ENCODE measurements at regions of chr11 and their contacts with region 1.

Region 1: GRCh38 chr11:32817181-32817851 is 12.4 kb upstream of the PRRG4 start:
- DNase-seq: no peak
- ATAC-seq: no peak
- H3K4me3 ChIP-seq: no peak overlapping the region
- H3K27ac ChIP-seq: no peak overlapping the region
- H3K4me1 ChIP-seq: no peaks in the 10 kb centered on the region
- H3K27me3 ChIP-seq: no peaks in the 10 kb centered on the region
- CTCF ChIP-seq: no peak
- EP300 ChIP-seq: no peak
- POLR2A ChIP-seq: no peak
- RAD21 ChIP-seq: no peak

Region 2: GRCh38 chr11:31995525-31996094 is 821.7 kb before region 1 on chr11:
- CTCF ChIA-PET with region 1: no interaction called
- POLR2A ChIA-PET with region 1: no interaction called
- RAD21 ChIA-PET with region 1: no interaction called
- SMC1A ChIA-PET with region 1: no interaction called
- in situ Hi-C with region 1: no loop called
- intact Hi-C with region 1: loop called (anchors 5 kb)
- DNase-seq: peak; percentile 26
- ATAC-seq: peak; percentile 92
- H3K4me3 ChIP-seq: no peak overlapping the region; the same call in 1 of the 2 replicates
- H3K27ac ChIP-seq: no peak overlapping the region
- H3K4me1 ChIP-seq: peaks cover 4% of the 10 kb centered on the region
- H3K27me3 ChIP-seq: no peaks in the 10 kb centered on the region
- CTCF ChIP-seq: no peak
- EP300 ChIP-seq: no peak
- POLR2A ChIP-seq: peak; percentile 52; the same call in 1 of the 2 replicates
- RAD21 ChIP-seq: no peak

Region 3: DNA sequence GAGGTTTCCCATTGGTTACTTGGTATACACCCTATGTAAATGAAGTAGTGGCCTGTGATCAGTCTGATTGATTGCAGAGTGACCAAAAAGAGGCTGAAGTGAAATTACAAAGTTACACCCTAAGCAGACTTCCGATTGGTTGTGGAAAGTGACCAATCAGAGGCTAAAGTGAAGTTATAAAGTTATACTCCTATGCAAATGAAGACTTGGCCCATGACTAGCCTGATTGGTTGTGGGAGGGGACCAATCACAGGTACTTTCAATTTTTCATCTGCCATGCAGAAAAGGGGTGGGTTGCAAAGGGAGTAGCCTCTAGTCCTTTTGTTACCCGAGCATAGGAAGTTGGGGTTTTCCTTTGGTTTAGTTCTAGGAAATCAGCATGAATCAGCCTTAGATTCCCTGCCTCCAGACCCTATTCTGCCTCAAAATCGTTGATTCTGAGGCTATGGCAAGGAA is 362.1 kb after region 1 on chr11:
- CTCF ChIA-PET with region 1: no interaction called
- POLR2A ChIA-PET with region 1: no interaction called
- RAD21 ChIA-PET with region 1: no interaction called
- SMC1A ChIA-PET with region 1: no interaction called
- in situ Hi-C with region 1: no loop called
- intact Hi-C with region 1: no loop called
- DNase-seq: no peak
- ATAC-seq: no peak; the same call in 1 of the 3 replicates
- H3K4me3 ChIP-seq: no peak overlapping the region
- H3K27ac ChIP-seq: no peak overlapping the region
- H3K4me1 ChIP-seq: no peaks in the 10 kb centered on the region
- H3K27me3 ChIP-seq: no peaks in the 10 kb centered on the region
- CTCF ChIP-seq: no peak
- EP300 ChIP-seq: no peak
- POLR2A ChIP-seq: no peak
- RAD21 ChIP-seq: no peak

Measured in GM12878 (cell line).